ENCODE measurements at regions of chr19 and their contacts with region 1.

Region 1: GRCh38 chr19:58182989-58183816 is at the start of gene ZNF274:
- DNase-seq: peak; percentile 94
- H3K4me3 Mint-ChIP-seq: peak within 1 kb of the TSS; percentile 82
- H3K27ac Mint-ChIP-seq: peak within 1 kb of the TSS; percentile 94
- H3K4me1 Mint-ChIP-seq: peaks cover 13% of the 10 kb centered on the region
- H3K27me3 Mint-ChIP-seq: no peaks in the 10 kb centered on the region
- total RNA-seq, gene ZNF274: 14.6 to 16.9 TPM

Region 2: DNA sequence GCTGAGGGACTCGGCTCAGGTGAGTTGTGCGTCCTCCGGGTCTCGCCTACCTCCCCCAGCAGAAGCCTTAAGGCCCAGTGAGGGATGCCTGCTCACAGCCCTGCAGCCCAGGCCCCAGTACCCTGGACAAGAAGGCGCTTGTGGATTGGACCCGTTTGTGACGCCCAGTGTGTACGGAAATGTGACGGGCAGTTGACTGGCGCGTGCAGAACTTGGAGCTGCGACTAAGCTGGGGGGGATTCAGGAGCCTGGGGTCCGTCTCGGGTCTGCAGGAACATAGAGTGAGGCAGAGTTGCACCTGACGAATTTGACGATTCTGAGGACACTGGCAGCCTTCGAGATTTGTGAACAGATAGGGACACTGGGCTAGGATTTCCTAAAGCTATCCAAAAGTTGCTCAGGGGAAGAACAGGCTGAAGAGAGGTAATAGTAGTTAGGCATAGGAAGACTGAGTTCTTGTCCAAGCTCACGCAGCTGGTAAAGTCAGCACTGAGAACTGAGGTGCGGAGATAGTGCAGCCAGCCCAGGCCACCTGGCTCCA is 500.9 kb before region 1 on chr19:
- CTCF ChIA-PET with region 1: no interaction called
- intact Hi-C with region 1: loop called (anchors 1 kb)
- DNase-seq: no peak
- H3K4me3 Mint-ChIP-seq: peak overlapping the region; percentile 94
- H3K27ac Mint-ChIP-seq: peak overlapping the region; percentile 84
- H3K4me1 Mint-ChIP-seq: peaks cover 32% of the 10 kb centered on the region
- H3K27me3 Mint-ChIP-seq: no peaks in the 10 kb centered on the region

Region 3: DNA sequence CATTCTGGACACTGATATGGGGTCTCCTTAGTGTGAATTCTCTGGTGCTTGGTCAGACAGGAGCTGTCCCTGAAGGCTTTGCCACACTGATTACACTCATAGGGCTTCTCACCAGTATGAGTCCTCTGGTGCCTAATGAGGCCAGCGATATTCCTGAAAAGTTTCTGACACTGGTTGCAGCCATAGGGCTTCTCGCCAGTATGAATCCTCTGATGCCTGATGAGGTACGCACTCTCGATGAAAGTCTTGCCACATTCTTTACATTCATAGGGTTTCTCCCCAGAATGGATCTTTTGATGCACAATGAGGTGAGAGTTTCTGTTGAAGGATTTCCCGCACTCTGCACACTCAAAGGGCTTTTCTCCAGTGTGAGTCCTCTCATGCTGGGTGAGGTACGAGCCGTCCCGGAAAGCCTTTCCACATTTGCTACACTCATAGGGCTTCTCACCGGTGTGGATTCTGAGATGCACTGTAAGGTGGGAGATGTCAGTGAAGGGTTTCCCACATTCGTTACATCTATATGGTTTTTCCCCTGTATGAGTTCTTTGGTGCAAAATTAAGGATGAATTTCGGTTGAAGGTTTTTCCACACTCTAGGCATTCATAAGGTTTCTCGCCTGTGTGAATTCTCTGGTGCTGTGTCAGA is 55.0 kb before region 1 on chr19:
- CTCF ChIA-PET with region 1: no interaction called
- intact Hi-C with region 1: no loop called
- DNase-seq: no peak
- H3K4me3 Mint-ChIP-seq: no peak overlapping the region
- H3K27ac Mint-ChIP-seq: no peak overlapping the region
- H3K4me1 Mint-ChIP-seq: no peaks in the 10 kb centered on the region
- H3K27me3 Mint-ChIP-seq: no peaks in the 10 kb centered on the region

Region 4: GRCh38 chr19:58278157-58279041 is 95.2 kb after region 1 on chr19 and contains the start of gene ZNF8:
- CTCF ChIA-PET with region 1: no interaction called
- intact Hi-C with region 1: loop called (anchors 1 kb)
- DNase-seq: peak; percentile 99
- H3K4me3 Mint-ChIP-seq: peak within 1 kb of the TSS; percentile 88
- H3K27ac Mint-ChIP-seq: peak within 1 kb of the TSS; percentile 93
- H3K4me1 Mint-ChIP-seq: peaks cover 25% of the 10 kb centered on the region
- H3K27me3 Mint-ChIP-seq: no peaks in the 10 kb centered on the region
- total RNA-seq, gene ZNF8: 3.2 to 3.6 TPM

Region 5: GRCh38 chr19:58362272-58362994 is 179.2 kb after region 1 on chr19 and contains the start of gene ZNF497:
- CTCF ChIA-PET with region 1: interaction called, 3 read pairs
- intact Hi-C with region 1: loop called (anchors 1 kb)
- DNase-seq: peak; percentile 97
- H3K4me3 Mint-ChIP-seq: peak within 1 kb of the TSS; percentile 93
- H3K27ac Mint-ChIP-seq: peak within 1 kb of the TSS; percentile 87
- H3K4me1 Mint-ChIP-seq: peaks cover 8% of the 10 kb centered on the region
- H3K27me3 Mint-ChIP-seq: no peaks in the 10 kb centered on the region
- total RNA-seq, gene ZNF497: 0.40 to 0.41 TPM

Region 6: DNA sequence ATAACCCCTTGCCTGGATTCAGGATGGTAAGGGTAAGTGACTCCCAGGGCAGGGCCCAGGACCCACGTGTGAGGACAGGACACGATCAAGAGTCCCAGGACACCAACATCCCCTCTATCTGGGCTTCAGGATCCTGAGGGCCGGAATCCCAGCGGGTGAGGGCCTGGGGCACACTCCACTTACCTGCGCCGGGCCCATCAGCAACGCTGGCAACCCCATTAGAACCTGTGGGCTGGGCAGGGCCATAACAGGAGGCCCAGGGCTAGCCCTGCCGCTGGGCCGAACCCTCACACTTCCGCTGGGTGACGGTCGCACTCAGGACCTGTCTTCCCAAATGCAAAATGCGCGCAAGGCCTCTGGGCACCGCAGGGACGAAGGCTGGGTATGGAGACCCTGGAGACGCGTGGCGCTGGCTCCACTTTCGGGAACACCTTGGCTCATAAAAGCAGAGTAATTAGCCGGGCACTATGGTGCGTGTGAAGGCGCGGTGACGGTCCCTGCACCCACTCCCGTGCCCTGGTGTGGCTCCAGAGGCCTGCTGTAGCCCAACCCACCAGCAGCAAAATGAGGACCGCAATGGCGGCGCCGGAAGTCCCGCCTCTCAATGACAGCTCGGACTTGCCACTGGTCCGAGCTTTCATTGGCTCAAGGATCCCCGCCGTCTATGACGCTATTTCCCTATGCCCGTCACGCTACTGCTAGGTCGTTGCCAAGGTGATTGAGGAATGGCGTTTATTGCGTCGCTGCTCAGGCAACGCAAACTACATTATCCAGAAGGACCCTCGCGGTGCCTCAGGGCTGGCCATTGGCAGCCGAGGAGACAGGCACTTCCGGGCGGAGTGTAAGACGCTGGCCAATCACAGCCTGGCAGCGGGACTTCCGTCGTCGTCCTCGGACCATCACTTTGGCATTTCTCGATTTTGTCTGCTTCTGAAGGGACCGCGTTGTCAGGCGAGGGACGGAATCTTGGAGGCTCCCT is 256.7 kb after region 1 on chr19 and contains the start of gene ZNF132:
- CTCF ChIA-PET with region 1: no interaction called
- intact Hi-C with region 1: loop called (anchors 1 kb)
- DNase-seq: peak; percentile 98
- H3K4me3 Mint-ChIP-seq: peak within 1 kb of the TSS; percentile 95
- H3K27ac Mint-ChIP-seq: peak within 1 kb of the TSS; percentile 88
- H3K4me1 Mint-ChIP-seq: peaks cover 18% of the 10 kb centered on the region
- H3K27me3 Mint-ChIP-seq: no peaks in the 10 kb centered on the region
- total RNA-seq, gene ZNF132: 2.8 to 2.9 TPM

Region 7: GRCh38 chr19:58519355-58520256 is 336.4 kb after region 1 on chr19 and contains the start of gene ZBTB45:
- CTCF ChIA-PET with region 1: no interaction called
- intact Hi-C with region 1: loop called (anchors 1 kb)
- DNase-seq: peak; percentile 94
- H3K4me3 Mint-ChIP-seq: peak within 1 kb of the TSS; percentile 93
- H3K27ac Mint-ChIP-seq: peak within 1 kb of the TSS; percentile 98
- H3K4me1 Mint-ChIP-seq: peaks cover 38% of the 10 kb centered on the region
- H3K27me3 Mint-ChIP-seq: no peaks in the 10 kb centered on the region
- total RNA-seq, gene ZBTB45: 5.5 to 6.0 TPM

Measured in activated naive CD4-positive, alpha-beta T cell treated with anti-CD3 and anti-CD28 coated beads for 36 hours (primary cell).